Activated naive CD4-positive, alpha-beta T cell treated with anti-CD3 and anti-CD28 coated beads, Interleukin-2, amount 10 ng/mL, durations not matched to agents 7 days and 5 days (primary cell): ENCODE measurements at regions of chr9 and their contacts with region 1.

Region 1: DNA sequence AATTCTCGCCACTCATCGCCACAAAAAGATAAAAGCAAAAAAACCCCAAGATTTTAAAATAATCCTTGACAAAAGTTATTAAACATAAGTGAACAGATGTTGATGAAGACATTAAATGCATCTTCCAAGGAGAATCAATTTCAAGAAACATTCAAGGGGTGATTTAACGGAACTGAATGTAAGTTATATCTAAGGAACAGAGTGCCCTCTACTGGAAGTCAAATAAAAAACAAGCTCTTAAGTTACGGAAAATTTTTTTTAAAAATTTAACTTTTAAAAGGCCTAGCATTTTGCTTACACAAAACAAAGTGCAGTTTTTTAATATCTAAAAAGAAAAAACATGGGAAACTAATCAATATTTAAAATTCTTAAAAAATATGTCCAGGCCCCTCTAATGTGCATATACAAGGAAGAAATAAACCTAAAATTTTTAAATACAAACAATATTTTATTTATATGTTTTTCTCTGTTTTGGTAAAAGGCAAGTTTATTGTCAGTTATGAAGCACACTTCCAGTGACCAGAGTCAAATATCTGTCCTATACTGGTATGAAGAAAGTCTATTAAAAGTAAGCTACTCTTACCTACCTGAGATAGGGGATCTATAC is 28.0 kb downstream of the TEX10 start:
- DNase-seq: no peak
- H3K4me3 Mint-ChIP-seq: no peak overlapping the region
- H3K27ac Mint-ChIP-seq: no peak overlapping the region
- H3K4me1 Mint-ChIP-seq: no peaks in the 10 kb centered on the region
- H3K27me3 Mint-ChIP-seq: no peaks in the 10 kb centered on the region

Region 2: GRCh38 chr9:100341889-100342288 is 17.2 kb after region 1 on chr9:
- CTCF ChIA-PET with region 1: interaction called, 12 read pairs
- DNase-seq: no peak
- H3K4me3 Mint-ChIP-seq: no peak overlapping the region
- H3K27ac Mint-ChIP-seq: no peak overlapping the region
- H3K4me1 Mint-ChIP-seq: peaks cover 7% of the 10 kb centered on the region
- H3K27me3 Mint-ChIP-seq: no peaks in the 10 kb centered on the region

Region 3: GRCh38 chr9:100352727-100353505 is 28.2 kb after region 1 on chr9 and contains the start of gene TEX10:
- CTCF ChIA-PET with region 1: interaction called, 16 read pairs
- DNase-seq: peak; percentile 91
- H3K4me3 Mint-ChIP-seq: peak within 1 kb of the TSS; percentile 84
- H3K27ac Mint-ChIP-seq: peak within 1 kb of the TSS; percentile 88
- H3K4me1 Mint-ChIP-seq: peaks cover 53% of the 10 kb centered on the region
- H3K27me3 Mint-ChIP-seq: no peaks in the 10 kb centered on the region